ENCODE measurements at regions of chr10 and their contacts with region 1.

Region 1: GRCh38 chr10:92290837-92291615 is at the starts of genes CPEB3 and MARCHF5:
- DNase-seq: peak; percentile 97
- H3K4me3 ChIP-seq: peak within 1 kb of the TSS; percentile 77 to 95 (median 93)
- H3K27ac ChIP-seq: peak within 1 kb of the TSS; percentile 91 to 93 (median 92)
- H3K4me1 ChIP-seq: peaks cover 7 to 18% (median 11%) of the 10 kb centered on the region in 4 donors
- H3K27me3 ChIP-seq: no peaks in the 10 kb centered on the region
- CTCF ChIP-seq: peak; percentile 65 to 97 (median 75)
- EP300 ChIP-seq: peak; percentile 26
- POLR2A ChIP-seq: peak; percentile 76
- total RNA-seq, gene CPEB3: 10.9 to 24.3 (median 13.1) TPM
- total RNA-seq, gene MARCHF5: 1.8 to 17.8 (median 9.1) TPM

Region 2: GRCh38 chr10:92087750-92088395 is 203.2 kb before region 1 on chr10:
- in situ Hi-C with region 1: loop called in 2 of 4 experiments (anchors 10 kb)
- intact Hi-C with region 1: loop called (anchors 10 kb)
- DNase-seq: peak; percentile 69
- H3K4me3 ChIP-seq: no peak overlapping the region
- H3K27ac ChIP-seq: no peak overlapping the region
- H3K4me1 ChIP-seq: peaks cover 0 to 3% (median 0%) of the 10 kb centered on the region in 4 donors
- H3K27me3 ChIP-seq: no peaks in the 10 kb centered on the region
- CTCF ChIP-seq: peak; percentile 68 to 93 (median 69)
- EP300 ChIP-seq: no peak
- POLR2A ChIP-seq: no peak

Region 3: DNA sequence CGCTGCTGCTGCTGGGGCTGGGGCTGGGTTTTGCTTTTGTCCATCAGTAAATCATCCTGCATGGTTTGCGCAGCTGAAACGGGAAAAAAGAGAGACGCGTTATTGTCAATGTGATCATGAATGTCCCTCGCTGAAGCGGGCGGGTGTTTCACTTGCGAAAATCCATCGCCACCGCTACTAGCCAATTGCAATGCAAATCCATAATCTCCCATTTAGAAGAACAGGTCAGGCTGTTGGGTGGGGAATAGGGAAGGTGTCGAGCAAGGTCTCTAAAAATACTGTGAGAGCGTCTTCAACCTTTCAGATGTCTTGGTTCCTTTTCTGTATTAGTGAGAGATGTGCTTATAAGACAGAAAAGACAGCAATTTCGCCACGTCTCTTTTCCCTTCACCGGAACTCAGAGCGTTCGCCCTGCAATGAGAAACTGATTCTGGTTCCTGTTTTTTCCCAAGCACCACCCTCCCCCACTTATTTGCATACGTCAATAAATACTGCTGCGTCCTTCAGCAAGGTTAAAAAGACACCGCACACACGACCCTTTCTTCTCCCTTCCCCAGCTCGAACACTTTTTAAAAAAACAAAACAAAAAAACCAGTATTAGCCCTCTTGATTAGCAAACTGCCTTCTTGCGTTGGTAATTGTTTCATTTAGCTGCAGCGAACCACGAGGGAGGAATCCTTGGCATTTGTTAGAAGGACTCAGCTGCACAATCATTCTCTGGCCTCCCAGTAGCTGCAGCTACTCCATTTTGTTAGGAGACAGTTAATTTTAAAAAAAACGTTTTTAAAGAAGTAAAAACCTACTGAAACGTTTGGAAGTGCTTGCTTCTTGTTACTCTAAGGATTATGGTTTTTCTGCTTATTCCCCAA is 50.5 kb before region 1 on chr10:
- in situ Hi-C with region 1: no loop called
- intact Hi-C with region 1: loop called (anchors 1 kb)
- DNase-seq: peak; percentile 78
- H3K4me3 ChIP-seq: peak overlapping the region; percentile 59 to 81 (median 73)
- H3K27ac ChIP-seq: peak overlapping the region; percentile 80 to 93 (median 92)
- H3K4me1 ChIP-seq: peaks cover 0 to 59% (median 32%) of the 10 kb centered on the region in 4 donors
- H3K27me3 ChIP-seq: no peaks in the 10 kb centered on the region
- CTCF ChIP-seq: no peak
- EP300 ChIP-seq: no peak
- POLR2A ChIP-seq: peak; percentile 95

Region 4: DNA sequence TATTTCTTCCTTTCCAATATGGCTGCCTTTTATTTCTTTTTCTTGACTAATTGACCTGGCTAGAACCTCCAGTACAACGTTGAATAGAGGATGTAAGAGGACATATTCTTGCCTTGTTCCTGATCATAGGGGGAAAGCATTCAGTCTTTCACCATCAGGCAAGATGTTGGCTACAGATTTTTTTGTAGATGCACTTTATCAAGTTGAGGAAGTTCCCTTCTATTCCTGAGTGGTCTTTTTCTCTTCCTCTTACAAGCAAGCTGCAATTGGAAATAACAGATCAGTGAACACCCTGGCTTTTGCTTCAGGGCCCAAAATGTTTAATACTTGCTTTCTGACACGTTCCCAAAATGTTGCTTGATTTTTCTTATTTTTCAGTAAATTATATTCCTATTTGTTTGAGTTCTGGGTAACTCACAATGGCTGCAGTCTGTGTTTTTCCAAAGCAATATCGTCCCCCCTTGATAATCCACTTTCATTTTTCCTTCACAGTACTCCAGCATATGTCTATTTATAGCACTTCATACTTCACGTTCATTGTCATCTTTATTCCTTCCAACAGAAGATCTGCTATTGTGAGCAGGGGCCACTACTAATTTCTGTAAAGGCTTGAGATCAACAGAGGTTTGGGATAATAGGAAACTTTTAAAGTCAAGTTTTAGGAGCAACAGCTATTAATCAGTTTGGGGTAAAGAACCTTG is 11.9 kb before region 1 on chr10:
- in situ Hi-C with region 1: no loop called
- intact Hi-C with region 1: loop called (anchors 1 kb)
- DNase-seq: no peak
- H3K4me3 ChIP-seq: peak overlapping the region in 1 of 4 donors; percentile 11
- H3K27ac ChIP-seq: peak overlapping the region; percentile 35 to 65 (median 48)
- H3K4me1 ChIP-seq: peaks cover 0 to 16% (median 2%) of the 10 kb centered on the region in 4 donors
- H3K27me3 ChIP-seq: no peaks in the 10 kb centered on the region
- CTCF ChIP-seq: no peak
- EP300 ChIP-seq: no peak
- POLR2A ChIP-seq: no peak

Measured in transverse colon (tissue), 4 donors.